ENCODE measurements at regions of chr18 and their contacts with region 1.

Region 1: DNA sequence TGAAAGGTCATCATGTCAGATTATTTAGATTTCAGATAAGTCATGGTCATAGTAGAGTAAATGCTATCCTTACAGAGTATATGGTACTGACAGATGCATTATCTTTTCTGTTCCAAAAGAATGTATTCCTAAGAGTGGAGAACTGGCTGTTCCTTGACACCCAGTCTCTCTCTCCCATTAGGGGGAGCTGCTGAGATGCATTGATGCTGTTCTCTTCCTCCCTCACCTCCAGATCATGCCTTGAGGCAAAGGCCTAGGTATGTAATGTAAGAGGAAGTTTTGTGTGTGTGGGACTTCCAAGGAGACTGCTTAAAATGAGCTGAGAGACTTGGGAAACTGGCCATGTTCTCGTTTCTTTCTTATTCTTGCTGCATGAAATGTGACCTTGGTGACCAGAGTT is 979.5 kb upstream of the CELF4 start:
- DNase-seq: peak in 1 of 2 experiments; percentile 52
- H3K4me3 ChIP-seq: no peak overlapping the region
- H3K27ac ChIP-seq: no peak overlapping the region
- H3K4me1 ChIP-seq: no peaks in the 10 kb centered on the region
- H3K27me3 ChIP-seq: no peaks in the 10 kb centered on the region; a peak in 1 of 7 replicates
- CTCF ChIP-seq: peak; percentile 48 to 83 (median 53)
- EP300 ChIP-seq: no peak
- POLR2A ChIP-seq: no peak
- RAD21 ChIP-seq: peak; percentile 84 to 85

Region 2: GRCh38 chr18:38221476-38222100 is 323.5 kb before region 1 on chr18:
- CTCF ChIA-PET with region 1: no interaction called
- POLR2A ChIA-PET with region 1: no interaction called
- DNase-seq: no peak
- H3K4me3 ChIP-seq: no peak overlapping the region
- H3K27ac ChIP-seq: no peak overlapping the region
- H3K4me1 ChIP-seq: no peaks in the 10 kb centered on the region
- H3K27me3 ChIP-seq: no peaks in the 10 kb centered on the region
- CTCF ChIP-seq: no peak
- EP300 ChIP-seq: no peak
- POLR2A ChIP-seq: no peak
- RAD21 ChIP-seq: no peak

Region 3: GRCh38 chr18:38557006-38557405 is 11.9 kb after region 1 on chr18:
- CTCF ChIA-PET with region 1: interaction called, 15 read pairs
- POLR2A ChIA-PET with region 1: no interaction called
- DNase-seq: no peak
- H3K4me3 ChIP-seq: no peak overlapping the region
- H3K27ac ChIP-seq: no peak overlapping the region
- H3K4me1 ChIP-seq: peaks cover 0 to 11% (median 9%) of the 10 kb centered on the region in 4 experiments; a peak in 5 of 7 replicates
- H3K27me3 ChIP-seq: no peaks in the 10 kb centered on the region
- CTCF ChIP-seq: no peak
- EP300 ChIP-seq: no peak
- POLR2A ChIP-seq: no peak
- RAD21 ChIP-seq: no peak